A673 (cell line): ENCODE measurements at regions of chr18 and their contacts with region 1.

Region 1: DNA sequence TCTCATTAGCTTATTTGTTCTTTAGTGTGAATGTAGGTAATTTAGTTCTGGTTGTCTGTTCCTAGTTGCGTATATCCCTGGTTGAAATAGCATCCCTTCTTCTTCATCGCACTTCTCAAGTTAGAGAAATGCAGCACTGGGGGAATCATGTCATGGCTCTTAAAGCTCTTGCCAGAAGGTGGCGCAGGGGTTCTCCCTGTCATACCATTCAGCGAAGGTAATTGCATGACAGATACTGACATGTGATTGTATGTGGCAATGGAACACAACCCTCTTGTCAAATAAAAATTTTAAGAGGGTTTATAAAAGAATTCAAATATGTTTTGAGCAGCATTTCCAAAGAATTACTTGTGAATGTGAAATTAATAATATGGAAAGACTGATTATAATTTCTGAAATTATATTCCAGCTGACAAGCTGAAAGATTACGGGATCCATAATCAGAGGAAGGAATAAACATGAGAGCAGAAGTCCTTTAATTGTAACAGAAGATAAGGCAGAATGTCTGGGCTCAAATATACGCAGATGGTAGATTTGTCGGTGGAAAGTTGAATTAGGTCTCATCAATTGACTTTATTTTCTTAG is 411.7 kb downstream of the DSEL start:
- DNase-seq: peak; percentile 79
- H3K4me3 ChIP-seq: no peak overlapping the region
- H3K27ac ChIP-seq: no peak overlapping the region
- H3K4me1 ChIP-seq: no peaks in the 10 kb centered on the region
- H3K27me3 ChIP-seq: no peaks in the 10 kb centered on the region
- CTCF ChIP-seq: peak; percentile 90

Region 2: GRCh38 chr18:67043276-67043675 is 61.5 kb before region 1 on chr18:
- CTCF ChIA-PET with region 1: no interaction called
- POLR2A ChIA-PET with region 1: no interaction called
- intact Hi-C with region 1: no loop called
- DNase-seq: no peak
- H3K4me3 ChIP-seq: no peak overlapping the region
- H3K27ac ChIP-seq: no peak overlapping the region
- H3K4me1 ChIP-seq: no peaks in the 10 kb centered on the region
- H3K27me3 ChIP-seq: no peaks in the 10 kb centered on the region
- CTCF ChIP-seq: no peak

Region 3: DNA sequence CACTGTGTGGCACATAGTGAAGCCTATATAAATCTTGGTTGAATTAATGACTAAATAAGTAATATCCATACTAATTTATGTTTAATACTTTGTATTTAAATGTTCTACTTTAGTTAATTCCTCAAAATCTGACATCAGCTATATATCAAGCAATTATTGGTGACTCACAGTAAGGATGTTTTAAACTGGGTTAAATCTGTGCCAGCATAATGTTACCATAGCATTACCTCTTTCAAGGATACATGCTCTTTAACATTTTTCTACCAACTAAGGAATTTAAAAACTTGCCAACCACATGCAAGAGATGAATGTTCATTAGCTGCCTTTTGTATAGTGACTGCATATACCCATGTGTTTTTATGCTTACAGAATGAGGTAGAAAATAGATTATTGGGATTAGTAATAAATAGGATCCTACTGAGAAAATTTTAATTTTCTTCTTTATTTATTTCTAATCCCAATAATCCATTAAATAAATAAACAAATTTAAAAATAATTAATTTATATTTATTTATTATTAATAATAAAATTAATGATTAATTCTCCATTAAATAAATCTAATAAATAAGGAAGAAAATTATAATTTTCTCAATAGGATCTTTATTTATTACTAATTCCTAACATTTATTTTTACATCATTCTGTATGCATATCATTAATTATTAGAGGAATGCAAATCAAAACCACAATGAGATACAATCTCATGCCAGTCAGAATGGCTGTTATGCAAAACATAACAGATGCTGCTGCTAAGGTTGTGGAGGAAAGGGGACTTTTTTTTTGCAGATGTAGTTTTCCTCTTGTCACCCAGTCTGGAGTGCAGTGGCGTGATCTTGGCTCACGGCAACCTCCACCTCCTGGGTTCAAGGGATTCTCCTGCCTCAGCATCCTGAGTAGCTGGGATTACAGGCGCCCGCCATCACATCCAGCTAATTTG is 822.4 kb after region 1 on chr18:
- CTCF ChIA-PET with region 1: no interaction called
- POLR2A ChIA-PET with region 1: no interaction called
- intact Hi-C with region 1: no loop called
- DNase-seq: peak; percentile 40
- H3K4me3 ChIP-seq: no peak overlapping the region
- H3K27ac ChIP-seq: no peak overlapping the region
- H3K4me1 ChIP-seq: no peaks in the 10 kb centered on the region
- H3K27me3 ChIP-seq: no peaks in the 10 kb centered on the region
- CTCF ChIP-seq: no peak

Region 4: DNA sequence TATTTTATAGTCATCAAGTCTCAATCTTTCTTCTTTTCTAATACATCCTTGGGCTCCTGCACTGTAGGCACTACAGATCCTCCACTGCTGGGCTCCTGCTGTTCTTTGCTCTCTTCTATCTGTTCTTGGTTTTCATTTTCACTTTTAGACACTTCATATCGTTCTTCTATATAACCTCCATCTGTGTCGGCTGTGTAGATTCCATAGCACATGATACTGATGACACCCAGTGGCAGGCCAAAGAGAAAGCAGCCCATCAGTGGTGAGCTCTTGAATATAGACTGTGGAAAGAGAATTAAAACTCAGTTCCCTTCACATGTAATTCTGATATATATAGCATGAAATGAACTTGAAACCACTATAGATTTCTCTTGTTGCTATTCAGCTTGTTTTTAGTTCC is 1572.1 kb after region 1 on chr18:
- CTCF ChIA-PET with region 1: no interaction called
- POLR2A ChIA-PET with region 1: no interaction called
- intact Hi-C with region 1: loop called (anchors 10 kb)
- DNase-seq: peak; percentile 65
- H3K4me3 ChIP-seq: no peak overlapping the region
- H3K27ac ChIP-seq: no peak overlapping the region
- H3K4me1 ChIP-seq: no peaks in the 10 kb centered on the region
- H3K27me3 ChIP-seq: no peaks in the 10 kb centered on the region
- CTCF ChIP-seq: peak; percentile 62